B cell (primary cell): ENCODE measurements at regions of chr14 and their contacts with region 1.

Region 1: GRCh38 chr14:39102969-39103957 is at the start of gene SEC23A:
- DNase-seq: peak; percentile 87
- ATAC-seq: peak; percentile 98
- H3K4me3 ChIP-seq: peak within 1 kb of the TSS; percentile 80 to 98 (median 88)
- H3K4me3 Mint-ChIP-seq: peak within 1 kb of the TSS; percentile 97
- H3K27ac ChIP-seq: peak within 1 kb of the TSS; percentile 83 to 93
- H3K27ac Mint-ChIP-seq: peak within 1 kb of the TSS; percentile 99
- H3K4me1 ChIP-seq: peaks cover 12 to 19% of the 10 kb centered on the region in 2 donors
- H3K4me1 Mint-ChIP-seq: peaks cover 32% of the 10 kb centered on the region
- H3K27me3 ChIP-seq: no peaks in the 10 kb centered on the region
- H3K27me3 Mint-ChIP-seq: no peaks in the 10 kb centered on the region
- CTCF ChIP-seq: no peak
- total RNA-seq, gene SEC23A: 52.3 and 54.9 TPM in 2 replicates

Region 2: DNA sequence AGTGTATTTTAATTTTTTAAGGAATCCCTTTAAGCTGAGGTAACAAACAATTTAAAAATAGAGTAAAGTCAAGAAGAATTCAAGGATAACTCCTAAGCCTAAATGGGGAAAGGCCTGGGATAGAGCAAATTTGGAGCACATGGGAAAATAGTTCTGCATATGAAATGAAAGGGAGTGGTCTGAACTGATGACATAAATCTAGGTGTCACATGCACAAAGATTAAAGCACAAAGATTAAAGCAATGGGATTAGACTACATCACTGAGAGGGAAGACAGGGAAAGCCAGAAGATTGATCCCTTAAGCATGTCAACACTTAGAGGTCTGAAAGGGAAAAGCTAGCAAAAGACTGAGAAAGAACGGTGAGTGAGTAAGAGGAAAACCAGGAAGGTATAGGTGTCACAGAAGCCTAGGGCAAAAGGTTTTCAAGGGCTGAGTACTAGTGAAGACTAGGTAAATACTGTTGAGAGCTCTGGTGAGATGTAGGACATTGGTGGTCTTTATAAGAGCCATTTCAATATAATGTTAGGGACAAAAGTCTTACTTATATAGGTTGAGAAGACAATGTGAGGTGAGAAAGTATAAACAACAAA is 59.8 kb before region 1 on chr14:
- CTCF ChIA-PET with region 1: no interaction called
- POLR2A ChIA-PET with region 1: no interaction called
- intact Hi-C with region 1: no loop called
- DNase-seq: no peak
- ATAC-seq: no peak
- H3K4me3 ChIP-seq: no peak overlapping the region
- H3K4me3 Mint-ChIP-seq: no peak overlapping the region
- H3K27ac ChIP-seq: no peak overlapping the region
- H3K27ac Mint-ChIP-seq: no peak overlapping the region
- H3K4me1 ChIP-seq: peaks cover 4 to 5% of the 10 kb centered on the region in 2 donors
- H3K4me1 Mint-ChIP-seq: peaks cover 13% of the 10 kb centered on the region
- H3K27me3 ChIP-seq: no peaks in the 10 kb centered on the region
- H3K27me3 Mint-ChIP-seq: no peaks in the 10 kb centered on the region
- CTCF ChIP-seq: no peak

Region 3: DNA sequence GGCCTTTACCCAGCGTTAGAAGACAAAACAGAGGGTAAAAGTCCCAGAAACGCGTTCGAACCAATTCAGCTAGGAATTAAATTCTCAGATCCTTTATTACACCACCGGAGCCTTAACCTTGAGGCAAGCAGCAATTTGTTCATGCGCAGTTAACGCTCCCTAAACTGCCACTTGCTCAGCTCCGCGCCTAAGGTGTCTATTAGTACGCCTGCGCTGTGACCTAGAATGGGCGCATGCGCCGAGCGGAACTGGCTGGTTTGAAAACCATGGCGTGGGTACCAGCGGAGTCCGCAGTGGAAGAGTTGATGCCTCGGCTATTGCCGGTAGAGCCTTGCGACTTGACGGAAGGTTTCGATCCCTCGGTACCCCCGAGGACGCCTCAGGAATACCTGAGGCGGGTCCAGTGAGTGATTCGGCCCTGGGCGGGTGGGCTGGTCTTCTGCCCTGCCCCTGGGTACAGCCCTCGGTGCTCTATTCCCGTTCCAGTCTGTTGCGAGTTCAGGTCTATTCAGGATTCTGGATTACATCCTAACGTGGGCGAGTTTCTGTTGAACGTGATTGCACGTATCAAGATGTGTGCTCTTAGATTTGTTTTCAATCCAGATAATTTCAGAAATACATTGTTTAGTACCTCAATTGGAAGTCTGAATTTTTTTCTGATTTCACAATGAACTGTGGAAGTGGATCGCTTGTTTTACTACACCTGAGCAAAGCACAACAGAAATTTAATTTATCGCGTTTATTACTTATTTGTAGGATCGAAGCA is 11.0 kb after region 1 on chr14 and contains the start of gene GEMIN2:
- CTCF ChIA-PET with region 1: interaction called, 8 read pairs
- POLR2A ChIA-PET with region 1: interaction called, 8 read pairs
- intact Hi-C with region 1: loop called (anchors 1 kb)
- DNase-seq: peak; percentile 96
- ATAC-seq: peak; percentile 99
- H3K4me3 ChIP-seq: peak within 1 kb of the TSS; percentile 68 to 85 (median 83)
- H3K4me3 Mint-ChIP-seq: peak within 1 kb of the TSS; percentile 93
- H3K27ac ChIP-seq: peak within 1 kb of the TSS; percentile 59 to 75
- H3K27ac Mint-ChIP-seq: peak within 1 kb of the TSS; percentile 92
- H3K4me1 ChIP-seq: peaks cover 13% of the 10 kb centered on the region in 2 donors
- H3K4me1 Mint-ChIP-seq: peaks cover 27% of the 10 kb centered on the region
- H3K27me3 ChIP-seq: no peaks in the 10 kb centered on the region
- H3K27me3 Mint-ChIP-seq: no peaks in the 10 kb centered on the region
- CTCF ChIP-seq: no peak
- total RNA-seq, gene GEMIN2: 13.4 and 18.2 TPM in 2 replicates

Region 4: GRCh38 chr14:39266871-39267591 is 163.8 kb after region 1 on chr14:
- CTCF ChIA-PET with region 1: interaction called, 3 read pairs
- POLR2A ChIA-PET with region 1: interaction called, 8 read pairs
- intact Hi-C with region 1: loop called (anchors 1 kb)
- DNase-seq: peak; percentile 95
- ATAC-seq: peak; percentile 82
- H3K4me3 ChIP-seq: peak overlapping the region; percentile 85 to 99 (median 89)
- H3K4me3 Mint-ChIP-seq: peak overlapping the region; percentile 98
- H3K27ac ChIP-seq: peak overlapping the region; percentile 97 to 100
- H3K27ac Mint-ChIP-seq: peak overlapping the region; percentile 99
- H3K4me1 ChIP-seq: peaks cover 20 to 32% of the 10 kb centered on the region in 2 donors
- H3K4me1 Mint-ChIP-seq: peaks cover 42% of the 10 kb centered on the region
- H3K27me3 ChIP-seq: no peaks in the 10 kb centered on the region
- H3K27me3 Mint-ChIP-seq: no peaks in the 10 kb centered on the region
- CTCF ChIP-seq: no peak

Region 5: DNA sequence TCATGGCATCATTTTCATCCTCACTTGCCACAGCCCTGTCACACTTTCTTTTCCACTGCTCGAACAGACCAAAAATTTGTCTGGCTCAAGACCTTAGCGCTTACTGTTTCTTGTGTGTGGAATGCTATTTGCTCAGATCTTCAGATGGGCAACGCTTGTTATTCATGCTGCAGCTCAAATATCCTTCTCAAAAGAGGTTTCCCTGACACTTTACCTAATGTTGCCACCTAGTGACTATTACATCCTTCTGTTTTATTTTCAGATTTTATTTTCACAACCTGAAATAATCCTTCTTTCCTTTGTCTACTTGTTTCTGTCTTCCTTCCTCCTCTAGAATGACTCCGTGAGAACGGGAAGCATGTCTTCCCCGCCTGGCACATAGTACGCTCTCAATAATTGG is 323.3 kb after region 1 on chr14:
- CTCF ChIA-PET with region 1: no interaction called
- POLR2A ChIA-PET with region 1: interaction called, 7 read pairs
- intact Hi-C with region 1: loop called (anchors 1 kb)
- DNase-seq: peak; percentile 21
- ATAC-seq: no peak
- H3K4me3 ChIP-seq: no peak overlapping the region
- H3K4me3 Mint-ChIP-seq: no peak overlapping the region
- H3K27ac ChIP-seq: no peak overlapping the region
- H3K27ac Mint-ChIP-seq: no peak overlapping the region
- H3K4me1 ChIP-seq: peaks cover 27 to 30% of the 10 kb centered on the region in 2 donors
- H3K4me1 Mint-ChIP-seq: peaks cover 62% of the 10 kb centered on the region
- H3K27me3 ChIP-seq: no peaks in the 10 kb centered on the region
- H3K27me3 Mint-ChIP-seq: no peaks in the 10 kb centered on the region
- CTCF ChIP-seq: peak; percentile 28